ENCODE measurements at regions of chr11 and their contacts with region 1.

Region 1: DNA sequence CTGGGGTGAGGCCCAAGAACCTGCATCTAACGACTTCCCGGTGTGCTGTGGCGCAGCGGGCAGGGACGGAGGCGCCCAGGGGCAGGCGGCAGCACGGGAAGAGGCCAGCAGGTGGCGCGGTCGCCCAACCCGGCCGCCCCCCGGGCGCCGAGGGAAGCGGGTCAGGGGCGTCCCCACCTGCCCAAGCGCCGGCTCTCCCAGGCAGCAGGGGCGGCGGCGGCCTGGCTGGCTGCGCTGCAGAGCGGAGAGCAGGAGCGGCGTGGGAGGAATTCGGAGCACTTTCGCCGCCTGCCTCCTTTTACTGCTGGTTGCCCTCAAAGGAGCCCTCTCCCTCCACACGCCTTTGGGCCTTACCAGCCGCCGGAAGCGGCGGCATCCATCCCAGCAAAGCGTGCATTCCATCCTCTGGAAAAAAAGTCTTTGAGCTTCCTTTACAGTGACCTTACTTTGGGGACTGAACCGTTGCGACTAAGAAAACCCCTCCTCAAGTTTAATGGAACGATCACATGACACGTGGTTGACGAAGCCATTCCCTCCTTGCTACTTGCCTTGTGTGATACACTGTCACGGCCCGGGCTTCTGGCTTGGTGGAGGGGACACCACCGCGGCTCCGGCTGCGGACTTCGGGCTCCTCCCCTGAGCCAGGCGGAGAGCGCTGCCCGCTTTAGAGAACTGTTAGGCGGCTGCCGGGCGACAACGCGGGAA is 106.8 kb upstream of the CLMP start:
- DNase-seq: peak; percentile 26 to 85 (median 60)
- ATAC-seq: peak; percentile 77
- H3K4me3 ChIP-seq: peak overlapping the region; percentile 61
- H3K4me3 Mint-ChIP-seq: peak overlapping the region; percentile 59
- H3K27ac ChIP-seq: peak overlapping the region in 1 of 2 donors; percentile 13
- H3K27ac Mint-ChIP-seq: peak overlapping the region; percentile 7
- H3K4me1 ChIP-seq: peaks cover 40% of the 10 kb centered on the region
- H3K4me1 Mint-ChIP-seq: peaks cover 37% of the 10 kb centered on the region
- H3K27me3 ChIP-seq: no peaks in the 10 kb centered on the region
- H3K27me3 Mint-ChIP-seq: no peaks in the 10 kb centered on the region
- CTCF ChIP-seq: peak; percentile 85

Region 2: GRCh38 chr11:123338330-123339005 is 36.6 kb after region 1 on chr11:
- CTCF ChIA-PET with region 1: no interaction called
- POLR2A ChIA-PET with region 1: no interaction called
- intact Hi-C with region 1: no loop called
- DNase-seq: no peak
- ATAC-seq: no peak
- H3K4me3 ChIP-seq: no peak overlapping the region
- H3K4me3 Mint-ChIP-seq: no peak overlapping the region
- H3K27ac ChIP-seq: no peak overlapping the region
- H3K27ac Mint-ChIP-seq: no peak overlapping the region
- H3K4me1 ChIP-seq: no peaks in the 10 kb centered on the region
- H3K4me1 Mint-ChIP-seq: no peaks in the 10 kb centered on the region
- H3K27me3 ChIP-seq: no peaks in the 10 kb centered on the region
- H3K27me3 Mint-ChIP-seq: no peaks in the 10 kb centered on the region
- CTCF ChIP-seq: no peak

Region 3: GRCh38 chr11:123434262-123434661 is 132.4 kb after region 1 on chr11:
- CTCF ChIA-PET with region 1: no interaction called
- POLR2A ChIA-PET with region 1: no interaction called
- intact Hi-C with region 1: no loop called
- DNase-seq: peak in 4 of 14 experiments; percentile 11 to 60 (median 52)
- ATAC-seq: no peak
- H3K4me3 ChIP-seq: no peak overlapping the region
- H3K4me3 Mint-ChIP-seq: peak overlapping the region; percentile 18
- H3K27ac ChIP-seq: no peak overlapping the region
- H3K27ac Mint-ChIP-seq: peak overlapping the region; percentile 15
- H3K4me1 ChIP-seq: peaks cover 42% of the 10 kb centered on the region
- H3K4me1 Mint-ChIP-seq: peaks cover 44% of the 10 kb centered on the region
- H3K27me3 ChIP-seq: no peaks in the 10 kb centered on the region
- H3K27me3 Mint-ChIP-seq: no peaks in the 10 kb centered on the region
- CTCF ChIP-seq: peak; percentile 42

Region 4: GRCh38 chr11:123478352-123478987 is 176.6 kb after region 1 on chr11:
- CTCF ChIA-PET with region 1: no interaction called
- POLR2A ChIA-PET with region 1: no interaction called
- intact Hi-C with region 1: loop called (anchors 1 kb)
- DNase-seq: peak in 9 of 14 experiments; percentile 4 to 78 (median 30)
- ATAC-seq: peak; percentile 26
- H3K4me3 ChIP-seq: peak overlapping the region; percentile 16
- H3K4me3 Mint-ChIP-seq: no peak overlapping the region
- H3K27ac ChIP-seq: no peak overlapping the region
- H3K27ac Mint-ChIP-seq: no peak overlapping the region
- H3K4me1 ChIP-seq: peaks cover 11% of the 10 kb centered on the region
- H3K4me1 Mint-ChIP-seq: no peaks in the 10 kb centered on the region
- H3K27me3 ChIP-seq: no peaks in the 10 kb centered on the region
- H3K27me3 Mint-ChIP-seq: no peaks in the 10 kb centered on the region
- CTCF ChIP-seq: peak; percentile 88